Ascending aorta (tissue), 2 donors: ENCODE measurements at regions of chr6 and their contacts with region 1.

Region 1: GRCh38 chr6:151675746-151676416 is 131.6 kb upstream of the ESR1 start:
- DNase-seq: no peak
- H3K4me3 ChIP-seq: no peak overlapping the region
- H3K27ac ChIP-seq: no peak overlapping the region
- H3K4me1 ChIP-seq: no peaks in the 10 kb centered on the region
- H3K27me3 ChIP-seq: peaks cover 3% of the 10 kb centered on the region
- CTCF ChIP-seq: peak; percentile 60 to 77 (median 75)

Region 2: GRCh38 chr6:152267967-152268845 is 592.3 kb after region 1 on chr6:
- intact Hi-C with region 1: loop called (anchors 10 kb)
- DNase-seq: no peak
- H3K4me3 ChIP-seq: no peak overlapping the region
- H3K27ac ChIP-seq: peak overlapping the region; percentile 35 to 81
- H3K4me1 ChIP-seq: peaks cover 7 to 52% of the 10 kb centered on the region in 2 donors
- H3K27me3 ChIP-seq: no peaks in the 10 kb centered on the region
- CTCF ChIP-seq: peak in 2 of 3 experiments; percentile 43 to 56